ENCODE measurements at regions of chr2 and their contacts with region 1.

Region 1: GRCh38 chr2:219119422-219120043 is 41.1 kb downstream of the NHEJ1 start:
- DNase-seq: peak; percentile 39 to 70
- ATAC-seq: peak in 7 of 8 donors; percentile 62 to 92 (median 78)
- H3K4me3 ChIP-seq: no peak overlapping the region
- H3K27ac ChIP-seq: no peak overlapping the region
- H3K4me1 ChIP-seq: peaks cover 0 to 26% (median 14%) of the 10 kb centered on the region in 9 donors
- H3K27me3 ChIP-seq: no peaks in the 10 kb centered on the region
- CTCF ChIP-seq: peak; percentile 47 to 85 (median 77)

Region 2: GRCh38 chr2:219073413-219074129 is 46.0 kb before region 1 on chr2:
- intact Hi-C with region 1: loop called in 9 of 10 experiments (anchors 2 to 5 kb)
- DNase-seq: no peak
- ATAC-seq: peak in 1 of 8 donors; percentile 54
- H3K4me3 ChIP-seq: no peak overlapping the region
- H3K27ac ChIP-seq: no peak overlapping the region
- H3K4me1 ChIP-seq: peaks cover 0 to 13% (median 0%) of the 10 kb centered on the region in 9 donors
- H3K27me3 ChIP-seq: no peaks in the 10 kb centered on the region
- CTCF ChIP-seq: peak; percentile 10 to 71 (median 58)

Region 3: GRCh38 chr2:219079417-219079816 is 40.1 kb before region 1 on chr2:
- intact Hi-C with region 1: loop called in 8 of 10 experiments (anchors 2 to 5 kb)
- DNase-seq: no peak
- ATAC-seq: no peak
- H3K4me3 ChIP-seq: no peak overlapping the region
- H3K27ac ChIP-seq: no peak overlapping the region
- H3K4me1 ChIP-seq: peaks cover 0 to 34% (median 13%) of the 10 kb centered on the region in 9 donors
- H3K27me3 ChIP-seq: no peaks in the 10 kb centered on the region
- CTCF ChIP-seq: no peak

Region 4: GRCh38 chr2:219331560-219332213 is 212.2 kb after region 1 on chr2:
- intact Hi-C with region 1: no loop called
- DNase-seq: peak; percentile 13 to 40
- ATAC-seq: peak in 6 of 8 donors; percentile 65 to 83 (median 76)
- H3K4me3 ChIP-seq: no peak overlapping the region
- H3K27ac ChIP-seq: no peak overlapping the region
- H3K4me1 ChIP-seq: peaks cover 0 to 7% (median 0%) of the 10 kb centered on the region in 9 donors
- H3K27me3 ChIP-seq: peaks cover 0 to 88% (median 63%) of the 10 kb centered on the region in 7 donors
- CTCF ChIP-seq: no peak